ENCODE measurements at regions of chr18 and their contacts with region 1.

Region 1: GRCh38 chr18:13095466-13095865 is 104.3 kb downstream of the CEP192 start:
- DNase-seq: no peak
- ATAC-seq: peak; percentile 23

Region 2: DNA sequence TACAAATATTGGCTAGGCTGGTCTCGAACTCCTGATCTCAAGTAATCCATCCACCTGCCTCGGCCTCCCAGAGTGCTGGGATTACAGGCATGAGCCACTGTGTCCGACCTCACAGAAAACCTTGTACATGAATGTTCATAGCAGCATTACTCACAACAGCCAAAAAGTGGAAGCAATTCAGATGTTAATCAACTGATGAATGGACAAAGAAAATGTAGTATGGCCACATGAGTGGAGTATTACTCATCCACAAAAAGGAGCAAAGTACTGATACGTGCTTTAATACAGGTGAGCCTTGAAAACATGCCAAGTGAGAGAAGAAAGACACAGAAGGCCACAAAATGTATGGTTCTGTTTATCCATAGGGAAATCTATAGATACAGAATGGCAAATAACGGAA is 83.7 kb before region 1 on chr18:
- intact Hi-C with region 1: loop called (anchors 5 kb)
- DNase-seq: no peak
- ATAC-seq: no peak

Region 3: DNA sequence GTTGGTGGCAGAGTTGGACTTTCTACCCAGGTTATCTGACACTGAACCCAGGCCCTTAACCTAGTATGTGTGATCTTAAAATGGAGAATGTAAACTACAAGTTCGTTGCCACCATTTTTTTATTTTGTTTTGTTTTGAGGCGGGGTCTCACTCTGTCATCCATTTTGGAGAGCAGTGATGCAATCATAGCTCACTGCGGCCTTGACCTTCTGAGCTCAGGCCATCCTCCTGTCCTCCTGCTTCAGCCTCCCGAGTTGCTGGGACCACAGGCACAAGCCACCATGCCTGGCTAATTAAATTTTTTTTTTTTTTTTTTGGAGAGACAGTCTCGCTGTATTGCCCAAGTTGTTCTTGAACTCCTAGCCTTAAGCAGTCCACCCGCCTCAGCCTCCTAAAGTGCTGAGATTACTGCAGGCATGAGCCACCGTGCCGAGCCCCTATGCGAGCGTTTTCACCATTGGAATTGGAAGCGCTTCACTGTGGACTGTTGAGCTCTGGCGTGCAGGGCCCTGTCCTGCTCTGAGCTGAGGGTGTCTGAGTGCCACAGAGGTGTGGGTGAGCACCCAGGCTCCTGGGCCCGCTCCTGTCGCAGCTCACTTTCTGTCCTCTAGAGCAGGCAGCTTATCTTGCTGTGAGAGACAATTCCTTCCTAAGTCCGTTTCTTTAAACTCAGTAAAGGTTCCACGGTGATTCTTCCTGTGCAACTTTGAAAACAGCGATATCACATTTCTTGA is 310.0 kb after region 1 on chr18:
- intact Hi-C with region 1: no loop called
- DNase-seq: no peak
- ATAC-seq: no peak

Region 4: GRCh38 chr18:13993730-13994129 is 898.3 kb after region 1 on chr18:
- intact Hi-C with region 1: no loop called
- DNase-seq: no peak
- ATAC-seq: no peak

Measured in Right ventricle myocardium inferior (tissue), 1 donor.